ENCODE measurements at regions of chr6 and their contacts with region 1.

Region 1: GRCh38 chr6:28838634-28839442 is 84.9 kb downstream of the TRIM27 start:
- DNase-seq: peak; percentile 91
- H3K4me3 ChIP-seq: peak overlapping the region; percentile 70
- H3K27ac ChIP-seq: peak overlapping the region; percentile 75
- H3K4me1 ChIP-seq: no peaks in the 10 kb centered on the region
- H3K27me3 ChIP-seq: no peaks in the 10 kb centered on the region
- CTCF ChIP-seq: peak; percentile 42

Region 2: DNA sequence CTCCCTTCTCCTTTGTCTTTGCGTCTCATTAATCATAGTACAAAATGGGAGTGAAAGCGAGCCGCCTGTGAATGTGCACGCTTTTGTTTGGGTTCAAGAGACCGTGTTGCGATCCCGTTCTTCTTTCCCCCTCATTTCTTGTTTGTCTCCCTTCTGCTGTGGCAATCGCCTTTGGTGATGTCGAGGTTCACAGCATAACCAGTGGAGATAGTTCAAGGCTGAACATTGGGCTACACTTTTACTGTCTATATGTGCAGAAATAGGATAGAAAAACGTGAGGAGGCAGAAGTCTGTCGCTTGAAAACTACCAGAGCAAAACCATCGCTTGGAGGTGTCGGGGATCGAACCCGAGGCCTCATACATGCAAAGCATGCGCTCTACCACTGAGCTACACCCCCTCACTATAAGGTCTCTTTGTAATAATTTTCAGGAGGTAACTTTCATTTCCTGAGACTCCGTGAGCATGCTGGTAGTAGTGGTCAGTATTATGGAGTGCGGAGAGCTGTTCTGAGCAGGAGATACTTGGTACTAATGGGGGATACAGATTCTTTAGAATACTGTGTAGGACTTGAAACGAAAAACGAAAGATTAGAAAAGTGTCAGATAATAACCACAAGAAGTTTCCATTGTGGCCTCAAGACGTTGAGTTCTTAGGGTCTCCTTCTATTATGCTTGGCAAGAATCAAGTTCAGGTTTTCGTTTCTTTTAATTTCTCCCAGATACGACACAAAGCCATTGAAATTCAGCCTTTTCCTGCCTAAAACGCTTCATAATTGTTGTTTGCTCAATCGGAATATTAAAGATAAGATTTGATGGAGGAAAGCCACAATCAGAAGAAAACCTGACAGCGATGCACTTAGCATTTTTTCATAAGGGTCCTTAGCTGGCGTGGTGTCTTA is 21.7 kb before region 1 on chr6:
- intact Hi-C with region 1: no loop called
- DNase-seq: peak; percentile 30
- H3K4me3 ChIP-seq: no peak overlapping the region
- H3K27ac ChIP-seq: no peak overlapping the region
- H3K4me1 ChIP-seq: no peaks in the 10 kb centered on the region
- H3K27me3 ChIP-seq: peaks cover 38% of the 10 kb centered on the region
- CTCF ChIP-seq: no peak

Region 3: GRCh38 chr6:28895134-28895812 is 56.4 kb after region 1 on chr6:
- intact Hi-C with region 1: loop called (anchors 2 kb)
- DNase-seq: peak; percentile 95
- H3K4me3 ChIP-seq: peak overlapping the region; percentile 70
- H3K27ac ChIP-seq: peak overlapping the region; percentile 99
- H3K4me1 ChIP-seq: peaks cover 3% of the 10 kb centered on the region
- H3K27me3 ChIP-seq: no peaks in the 10 kb centered on the region
- CTCF ChIP-seq: no peak

Region 4: GRCh38 chr6:28981833-28982475 is 143.1 kb after region 1 on chr6:
- intact Hi-C with region 1: loop called (anchors 10 kb)
- DNase-seq: peak; percentile 77
- H3K4me3 ChIP-seq: peak overlapping the region; percentile 44
- H3K27ac ChIP-seq: peak overlapping the region; percentile 21
- H3K4me1 ChIP-seq: no peaks in the 10 kb centered on the region
- H3K27me3 ChIP-seq: no peaks in the 10 kb centered on the region
- CTCF ChIP-seq: no peak

Region 5: DNA sequence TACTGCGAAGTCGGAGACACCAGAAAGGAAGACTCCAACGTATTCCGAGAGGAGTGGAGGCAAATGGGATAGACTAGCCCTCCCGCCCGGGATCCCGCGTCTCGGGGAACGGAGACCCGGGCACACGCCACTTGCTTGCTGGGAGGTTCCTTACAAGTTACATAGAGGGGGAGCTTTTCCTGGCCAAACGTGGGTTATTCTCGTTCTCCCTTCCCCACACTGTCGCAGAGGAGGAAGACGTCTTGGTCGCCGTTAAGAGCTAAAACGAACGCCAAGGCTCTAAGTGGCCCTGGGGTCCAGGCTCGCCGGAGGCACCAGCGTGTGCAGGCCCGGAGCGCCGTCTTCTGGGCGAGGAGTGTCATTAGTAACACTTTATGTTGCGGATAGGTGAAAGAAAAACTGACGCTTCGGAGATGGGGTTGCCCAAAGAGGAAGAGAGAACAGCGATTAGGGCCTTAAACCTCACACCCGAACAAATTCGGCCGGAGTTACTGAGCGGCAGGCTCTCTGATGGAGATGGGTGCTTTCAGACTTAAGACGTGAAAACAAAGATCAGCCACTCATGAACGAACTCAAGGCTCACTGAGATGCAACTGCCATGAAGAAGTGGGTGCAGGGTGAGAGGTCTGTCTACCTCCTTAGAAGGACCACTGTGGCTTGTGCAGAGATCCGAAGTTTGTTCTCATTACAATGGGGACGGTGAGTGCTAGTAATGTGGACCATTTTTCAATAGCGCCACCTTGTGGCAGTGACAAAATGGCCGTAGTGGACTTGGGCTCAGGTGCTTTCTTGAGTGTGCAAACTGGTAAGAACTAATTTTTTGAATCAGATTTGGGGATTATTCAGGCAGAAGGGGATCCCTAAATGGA is 178.0 kb after region 1 on chr6:
- intact Hi-C with region 1: loop called (anchors 2 kb)
- DNase-seq: peak; percentile 92
- H3K4me3 ChIP-seq: peak overlapping the region; percentile 52
- H3K27ac ChIP-seq: peak overlapping the region; percentile 26
- H3K4me1 ChIP-seq: no peaks in the 10 kb centered on the region
- H3K27me3 ChIP-seq: peaks cover 6% of the 10 kb centered on the region
- CTCF ChIP-seq: peak; percentile 83

Region 6: DNA sequence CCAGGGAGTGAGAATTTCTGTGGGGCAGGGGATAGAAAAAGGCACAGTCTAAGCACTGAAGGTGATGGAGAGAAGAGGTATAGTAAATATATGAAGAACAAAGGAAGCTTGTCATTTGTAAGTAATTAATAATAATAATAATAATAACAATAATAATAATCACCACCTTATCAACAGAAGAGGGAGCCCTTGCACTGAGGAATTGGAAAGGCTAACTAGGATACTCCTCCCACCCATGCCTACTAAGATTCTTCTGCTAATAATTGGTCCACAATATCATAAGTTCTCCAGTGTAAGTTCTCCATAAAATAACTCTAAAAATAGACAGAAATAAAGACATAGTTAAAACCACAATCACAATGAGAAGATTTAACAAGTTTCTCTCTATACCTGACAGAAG is 537.2 kb after region 1 on chr6:
- intact Hi-C with region 1: no loop called
- DNase-seq: no peak
- H3K4me3 ChIP-seq: no peak overlapping the region
- H3K27ac ChIP-seq: no peak overlapping the region
- H3K4me1 ChIP-seq: no peaks in the 10 kb centered on the region
- H3K27me3 ChIP-seq: no peaks in the 10 kb centered on the region
- CTCF ChIP-seq: no peak

Measured in colonic mucosa (tissue), 4 donors.